Calu3 (cell line): ENCODE measurements at regions of chr3 and their contacts with region 1.

Region 1: GRCh38 chr3:36868614-36869436 is 76.0 kb downstream of the TRANK1 start:
- DNase-seq: peak; percentile 43
- H3K4me3 Mint-ChIP-seq: no peak overlapping the region
- H3K27ac Mint-ChIP-seq: no peak overlapping the region
- H3K4me1 Mint-ChIP-seq: no peaks in the 10 kb centered on the region
- H3K27me3 Mint-ChIP-seq: peaks cover 14% of the 10 kb centered on the region
- CTCF ChIP-seq: peak; percentile 66

Region 2: DNA sequence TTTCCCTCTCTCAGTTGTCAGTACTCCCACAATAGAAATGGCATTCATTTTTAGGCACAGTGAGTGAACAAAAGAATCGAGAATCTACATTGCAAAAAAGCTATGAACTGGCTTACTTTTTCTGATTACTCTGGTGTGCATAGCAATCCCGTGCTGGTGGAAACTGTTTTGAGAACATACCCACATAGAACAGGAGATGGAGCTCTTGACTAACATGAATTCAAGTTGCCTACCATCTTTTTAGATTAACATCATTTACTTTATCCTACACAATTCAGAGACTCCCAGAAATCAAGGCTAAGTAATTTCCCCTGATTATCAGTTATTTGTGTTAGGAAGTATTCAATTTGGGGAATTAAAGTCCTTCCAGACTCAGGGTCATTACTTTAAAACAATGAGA is 902.9 kb before region 1 on chr3:
- CTCF ChIA-PET with region 1: interaction called, 5 read pairs
- intact Hi-C with region 1: loop called (anchors 2 kb)
- DNase-seq: peak; percentile 7
- H3K4me3 Mint-ChIP-seq: no peak overlapping the region
- H3K27ac Mint-ChIP-seq: no peak overlapping the region
- H3K4me1 Mint-ChIP-seq: no peaks in the 10 kb centered on the region
- H3K27me3 Mint-ChIP-seq: no peaks in the 10 kb centered on the region
- CTCF ChIP-seq: no peak

Region 3: GRCh38 chr3:36729204-36730056 is 139.4 kb before region 1 on chr3:
- CTCF ChIA-PET with region 1: interaction called, 3 read pairs
- intact Hi-C with region 1: loop called (anchors 1 kb)
- DNase-seq: no peak
- H3K4me3 Mint-ChIP-seq: no peak overlapping the region
- H3K27ac Mint-ChIP-seq: no peak overlapping the region
- H3K4me1 Mint-ChIP-seq: peaks cover 17% of the 10 kb centered on the region
- H3K27me3 Mint-ChIP-seq: peaks cover 28% of the 10 kb centered on the region
- CTCF ChIP-seq: no peak

Region 4: GRCh38 chr3:36792342-36792741 is 76.5 kb before region 1 on chr3:
- CTCF ChIA-PET with region 1: interaction called, 10 read pairs
- intact Hi-C with region 1: loop called (anchors 2 kb)
- DNase-seq: peak; percentile 48
- H3K4me3 Mint-ChIP-seq: no peak overlapping the region
- H3K27ac Mint-ChIP-seq: no peak overlapping the region
- H3K4me1 Mint-ChIP-seq: no peaks in the 10 kb centered on the region
- H3K27me3 Mint-ChIP-seq: peaks cover 75% of the 10 kb centered on the region
- CTCF ChIP-seq: no peak